ENCODE measurements at regions of chr3 and their contacts with region 1.

Region 1: DNA sequence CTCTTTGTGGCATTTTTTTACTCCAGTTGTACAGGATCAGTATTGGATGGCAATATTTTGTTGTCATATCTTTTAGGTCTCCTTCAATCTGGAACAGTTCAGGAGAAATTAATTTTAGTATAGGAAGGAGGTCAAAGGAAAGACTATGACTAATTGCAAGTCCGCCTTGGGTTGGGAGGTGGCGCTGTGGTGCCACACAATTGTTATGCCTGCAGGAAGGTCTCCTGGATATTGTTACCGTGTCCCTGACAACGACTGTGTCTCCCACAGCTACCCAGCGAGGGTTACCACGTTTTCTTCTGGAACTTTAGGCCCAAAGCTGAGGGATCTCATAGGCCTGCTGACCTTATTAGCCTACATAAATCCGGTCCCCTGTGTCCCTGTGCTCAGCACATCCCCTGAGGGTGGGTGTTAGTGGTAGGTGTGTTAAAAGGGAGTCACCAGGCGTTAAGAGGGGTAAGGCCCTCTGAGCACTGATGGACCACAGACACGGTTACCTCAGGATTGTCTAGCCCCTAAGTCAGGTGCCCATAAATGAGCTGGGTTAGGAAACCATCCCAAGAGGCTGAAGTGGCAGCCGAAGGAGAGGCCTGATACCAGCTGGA is 31.5 kb downstream of the KCNAB1 start:
- DNase-seq: peak; percentile 69
- ATAC-seq: peak; percentile 76
- H3K4me3 ChIP-seq: no peak overlapping the region
- H3K27ac ChIP-seq: no peak overlapping the region
- H3K4me1 ChIP-seq: peaks cover 3% of the 10 kb centered on the region
- H3K27me3 ChIP-seq: peaks cover 4% of the 10 kb centered on the region
- CTCF ChIP-seq: peak; percentile 90
- POLR2A ChIP-seq: no peak
- RAD21 ChIP-seq: peak; percentile 85

Region 2: GRCh38 chr3:155995525-155996351 is 156.2 kb before region 1 on chr3:
- CTCF ChIA-PET with region 1: no interaction called
- POLR2A ChIA-PET with region 1: no interaction called
- dilution Hi-C with region 1: no loop called
- in situ Hi-C with region 1: no loop called
- intact Hi-C with region 1: loop called (anchors 5 kb)
- DNase-seq: peak; percentile 72
- ATAC-seq: peak; percentile 95
- H3K4me3 ChIP-seq: no peak overlapping the region
- H3K27ac ChIP-seq: no peak overlapping the region
- H3K4me1 ChIP-seq: 0 out of 2 replicates have a peak, but pooled peaks cover 2% of the 10 kb centered on the region
- H3K27me3 ChIP-seq: no peaks in the 10 kb centered on the region
- CTCF ChIP-seq: peak; percentile 68
- POLR2A ChIP-seq: no peak
- RAD21 ChIP-seq: peak; percentile 64

Region 3: GRCh38 chr3:156449712-156450574 is 298.0 kb after region 1 on chr3:
- CTCF ChIA-PET with region 1: interaction called, 10 read pairs
- POLR2A ChIA-PET with region 1: no interaction called
- dilution Hi-C with region 1: no loop called
- in situ Hi-C with region 1: no loop called
- intact Hi-C with region 1: loop called (anchors 2 kb)
- DNase-seq: peak; percentile 30
- ATAC-seq: peak; percentile 74
- H3K4me3 ChIP-seq: no peak overlapping the region
- H3K27ac ChIP-seq: no peak overlapping the region
- H3K4me1 ChIP-seq: no peaks in the 10 kb centered on the region
- H3K27me3 ChIP-seq: peaks cover 6% of the 10 kb centered on the region
- CTCF ChIP-seq: peak; percentile 53
- POLR2A ChIP-seq: no peak
- RAD21 ChIP-seq: peak; percentile 35

Region 4: GRCh38 chr3:156674046-156674910 is 522.4 kb after region 1 on chr3 and contains the start of gene TIPARP:
- CTCF ChIA-PET with region 1: no interaction called
- POLR2A ChIA-PET with region 1: no interaction called
- dilution Hi-C with region 1: no loop called
- in situ Hi-C with region 1: loop called (anchors 25 kb)
- intact Hi-C with region 1: loop called (anchors 5 kb)
- DNase-seq: peak; percentile 96
- ATAC-seq: peak; percentile 94
- H3K4me3 ChIP-seq: peak within 1 kb of the TSS; percentile 71
- H3K27ac ChIP-seq: peak within 1 kb of the TSS; percentile 62
- H3K4me1 ChIP-seq: peaks cover 7% of the 10 kb centered on the region
- H3K27me3 ChIP-seq: no peaks in the 10 kb centered on the region
- CTCF ChIP-seq: peak; percentile 58
- POLR2A ChIP-seq: peak; percentile 99
- RAD21 ChIP-seq: peak; percentile 59
- total RNA-seq, gene TIPARP: 70.8 and 76.4 TPM in 2 replicates

Region 5: DNA sequence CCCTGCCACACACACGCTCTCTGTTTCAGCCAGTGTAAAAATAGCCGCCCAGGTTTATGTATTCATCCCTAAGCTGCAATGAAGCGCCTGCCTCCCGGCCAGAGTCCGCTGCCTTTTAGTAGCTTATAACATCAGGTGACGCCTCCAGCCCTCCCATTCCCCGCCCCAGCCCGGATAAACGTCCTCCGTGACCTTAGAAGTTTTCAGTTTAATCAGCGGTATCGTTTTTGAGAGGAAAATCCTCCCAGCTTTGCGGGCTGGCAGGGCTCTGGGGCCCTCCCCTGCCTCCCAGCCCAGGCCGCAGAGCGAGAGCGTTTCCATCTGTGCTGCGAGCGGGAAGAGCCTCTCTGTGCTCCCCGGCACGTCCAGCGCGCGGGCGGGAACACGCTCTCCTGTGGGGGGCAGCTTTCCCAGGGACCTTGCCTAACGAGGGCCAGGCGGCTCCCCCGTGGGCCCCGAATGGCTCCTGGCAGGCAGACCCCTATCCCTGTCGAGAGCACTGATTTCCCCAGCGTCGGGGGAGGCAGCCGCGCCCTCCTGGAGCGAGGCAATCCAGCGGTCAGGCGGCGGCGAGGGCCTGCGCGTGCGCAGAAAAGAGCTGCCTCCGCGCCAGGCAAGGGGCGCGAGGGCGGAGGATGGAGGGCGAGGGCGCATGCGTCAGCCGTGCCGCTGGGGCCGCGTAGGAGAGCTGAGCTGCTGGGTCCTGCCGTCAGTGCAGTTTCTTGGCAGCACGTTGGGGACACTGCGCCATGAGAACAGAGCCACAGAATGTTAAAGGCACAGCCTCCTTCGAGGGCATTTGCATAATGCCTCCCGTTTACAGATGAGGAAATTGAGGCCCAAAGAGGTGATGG is 936.9 kb after region 1 on chr3:
- CTCF ChIA-PET with region 1: interaction called, 3 read pairs
- POLR2A ChIA-PET with region 1: no interaction called
- dilution Hi-C with region 1: no loop called
- in situ Hi-C with region 1: no loop called
- intact Hi-C with region 1: loop called (anchors 2 kb)
- DNase-seq: peak; percentile 94
- ATAC-seq: peak; percentile 90
- H3K4me3 ChIP-seq: peak overlapping the region; percentile 45
- H3K27ac ChIP-seq: peak overlapping the region; percentile 94
- H3K4me1 ChIP-seq: peaks cover 22% of the 10 kb centered on the region
- H3K27me3 ChIP-seq: no peaks in the 10 kb centered on the region
- CTCF ChIP-seq: 0 out of 2 replicates have a peak, but pooled peaks have one; percentile 19
- POLR2A ChIP-seq: peak; percentile 87
- RAD21 ChIP-seq: 0 out of 2 replicates have a peak, but pooled peaks have one; percentile 17